Calu3 (cell line): ENCODE measurements at regions of chr1 and their contacts with region 1.

Region 1: GRCh38 chr1:224106568-224107281 is 7.2 kb upstream of the FBXO28 start:
- DNase-seq: peak; percentile 68
- H3K4me3 Mint-ChIP-seq: no peak overlapping the region
- H3K27ac Mint-ChIP-seq: peak overlapping the region; percentile 24
- H3K4me1 Mint-ChIP-seq: peaks cover 35% of the 10 kb centered on the region
- H3K27me3 Mint-ChIP-seq: no peaks in the 10 kb centered on the region
- CTCF ChIP-seq: peak; percentile 21

Region 2: GRCh38 chr1:224051086-224051406 is 55.7 kb before region 1 on chr1:
- CTCF ChIA-PET with region 1: interaction called, 14 read pairs
- intact Hi-C with region 1: no loop called
- DNase-seq: no peak
- H3K4me3 Mint-ChIP-seq: no peak overlapping the region
- H3K27ac Mint-ChIP-seq: no peak overlapping the region
- H3K4me1 Mint-ChIP-seq: peaks cover 35% of the 10 kb centered on the region
- H3K27me3 Mint-ChIP-seq: no peaks in the 10 kb centered on the region
- CTCF ChIP-seq: peak; percentile 2

Region 3: GRCh38 chr1:224067621-224068457 is 38.9 kb before region 1 on chr1:
- CTCF ChIA-PET with region 1: interaction called, 8 read pairs
- intact Hi-C with region 1: loop called (anchors 5 kb)
- DNase-seq: no peak
- H3K4me3 Mint-ChIP-seq: no peak overlapping the region
- H3K27ac Mint-ChIP-seq: peak overlapping the region; percentile 95
- H3K4me1 Mint-ChIP-seq: peaks cover 53% of the 10 kb centered on the region
- H3K27me3 Mint-ChIP-seq: no peaks in the 10 kb centered on the region
- CTCF ChIP-seq: no peak

Region 4: DNA sequence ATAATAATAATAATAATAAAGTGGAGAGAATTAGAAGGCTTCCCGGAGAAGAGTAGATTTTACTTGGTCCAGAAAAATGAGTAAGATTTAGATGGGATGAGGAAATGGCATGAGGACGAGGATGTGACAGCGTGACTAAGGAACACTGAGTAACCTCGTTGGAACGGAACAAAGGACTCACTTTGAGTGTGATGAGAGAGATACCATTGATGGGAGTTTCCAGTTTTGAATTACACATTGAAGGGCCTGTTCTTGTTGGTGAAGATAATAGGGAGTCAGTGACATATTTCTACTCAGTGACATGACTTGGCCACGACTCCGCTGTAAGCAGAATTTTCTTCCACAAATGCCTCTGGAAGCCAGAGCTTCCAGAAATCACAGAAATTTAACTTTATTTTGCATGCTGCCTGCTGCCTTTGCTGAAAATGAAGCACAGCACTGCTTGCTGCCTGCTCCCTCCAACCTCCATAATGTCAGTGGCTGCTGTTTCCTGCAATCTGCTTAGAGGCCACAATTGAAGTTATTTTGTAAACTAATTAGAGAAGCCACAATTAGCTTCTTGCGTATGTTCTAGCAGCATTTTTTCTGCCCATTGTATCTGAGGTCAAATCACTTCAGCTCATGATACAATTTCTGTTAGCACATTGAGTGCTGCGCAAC is 26.5 kb before region 1 on chr1:
- CTCF ChIA-PET with region 1: interaction called, 11 read pairs
- intact Hi-C with region 1: loop called (anchors 2 kb)
- DNase-seq: peak; percentile 69
- H3K4me3 Mint-ChIP-seq: peak overlapping the region; percentile 48
- H3K27ac Mint-ChIP-seq: peak overlapping the region; percentile 99
- H3K4me1 Mint-ChIP-seq: peaks cover 58% of the 10 kb centered on the region
- H3K27me3 Mint-ChIP-seq: no peaks in the 10 kb centered on the region
- CTCF ChIP-seq: no peak